Panc1 (cell line): ENCODE measurements at regions of chr11 and their contacts with region 1.

Region 1: GRCh38 chr11:57567515-57568329 is at the start of gene UBE2L6:
- DNase-seq: no peak
- ATAC-seq: peak; percentile 90
- H3K4me3 ChIP-seq: peak within 1 kb of the TSS; percentile 68 to 82
- H3K27ac ChIP-seq: peak within 1 kb of the TSS; percentile 77
- H3K4me1 ChIP-seq: peaks cover 12% of the 10 kb centered on the region
- H3K27me3 ChIP-seq: no peaks in the 10 kb centered on the region
- CTCF ChIP-seq: no peak; the same call in 1 of the 2 replicates
- total RNA-seq, gene UBE2L6: 19.1 TPM

Region 2: DNA sequence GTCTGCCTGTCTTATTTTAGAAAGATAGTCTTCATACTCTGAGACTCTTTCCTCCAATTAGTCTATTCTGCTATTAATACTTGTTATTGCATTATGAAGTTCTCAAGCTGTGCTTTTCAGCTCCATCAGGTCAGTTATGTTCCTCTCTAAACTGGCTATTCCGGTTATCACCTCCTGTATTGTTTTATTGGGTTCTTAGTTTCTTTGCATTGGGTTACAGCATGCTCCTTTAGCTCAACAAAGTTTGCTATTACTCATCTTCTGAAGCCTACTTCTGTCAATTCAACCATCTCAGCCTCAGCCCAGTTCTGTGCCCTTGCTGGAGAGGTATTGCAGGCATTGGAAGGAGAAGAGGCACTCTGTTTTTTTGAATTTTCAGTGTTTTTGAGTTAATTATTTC is 600.0 kb before region 1 on chr11:
- CTCF ChIA-PET with region 1: no interaction called
- POLR2A ChIA-PET with region 1: no interaction called
- in situ Hi-C with region 1: no loop called
- intact Hi-C with region 1: no loop called
- DNase-seq: no peak
- ATAC-seq: no peak
- H3K4me3 ChIP-seq: no peak overlapping the region
- H3K27ac ChIP-seq: no peak overlapping the region
- H3K4me1 ChIP-seq: no peaks in the 10 kb centered on the region
- H3K27me3 ChIP-seq: no peaks in the 10 kb centered on the region
- CTCF ChIP-seq: no peak

Region 3: DNA sequence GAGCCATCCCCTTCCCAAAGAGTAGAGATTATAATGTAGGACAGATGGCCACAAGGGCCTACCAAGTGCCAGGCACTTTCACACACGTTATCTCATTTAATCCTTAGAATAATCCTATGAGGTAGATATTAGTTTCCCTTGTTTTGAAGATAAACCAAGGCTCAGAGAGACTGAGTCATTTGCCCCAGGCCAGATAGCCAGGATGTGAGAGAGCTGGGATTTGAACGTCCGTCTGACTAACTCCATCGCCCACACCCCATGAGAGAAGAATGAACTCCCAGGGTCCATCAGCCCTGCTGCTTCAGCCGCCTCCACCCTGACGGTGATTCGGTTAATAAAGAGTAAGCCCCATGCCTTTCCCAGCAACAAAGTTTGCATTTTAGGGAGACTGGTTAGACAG is 197.5 kb before region 1 on chr11:
- CTCF ChIA-PET with region 1: no interaction called
- POLR2A ChIA-PET with region 1: interaction called, 13 read pairs
- in situ Hi-C with region 1: no loop called
- intact Hi-C with region 1: no loop called
- DNase-seq: no peak
- ATAC-seq: no peak
- H3K4me3 ChIP-seq: no peak overlapping the region
- H3K27ac ChIP-seq: no peak overlapping the region
- H3K4me1 ChIP-seq: no peaks in the 10 kb centered on the region
- H3K27me3 ChIP-seq: peaks cover 3% of the 10 kb centered on the region; the same call in 1 of the 2 replicates
- CTCF ChIP-seq: no peak

Region 4: GRCh38 chr11:57616595-57616994 is 48.9 kb after region 1 on chr11:
- CTCF ChIA-PET with region 1: no interaction called
- POLR2A ChIA-PET with region 1: no interaction called
- in situ Hi-C with region 1: no loop called
- intact Hi-C with region 1: loop called (anchors 2 kb)
- DNase-seq: no peak
- ATAC-seq: no peak
- H3K4me3 ChIP-seq: no peak overlapping the region
- H3K27ac ChIP-seq: no peak overlapping the region
- H3K4me1 ChIP-seq: no peaks in the 10 kb centered on the region
- H3K27me3 ChIP-seq: no peaks in the 10 kb centered on the region
- CTCF ChIP-seq: no peak

Region 5: DNA sequence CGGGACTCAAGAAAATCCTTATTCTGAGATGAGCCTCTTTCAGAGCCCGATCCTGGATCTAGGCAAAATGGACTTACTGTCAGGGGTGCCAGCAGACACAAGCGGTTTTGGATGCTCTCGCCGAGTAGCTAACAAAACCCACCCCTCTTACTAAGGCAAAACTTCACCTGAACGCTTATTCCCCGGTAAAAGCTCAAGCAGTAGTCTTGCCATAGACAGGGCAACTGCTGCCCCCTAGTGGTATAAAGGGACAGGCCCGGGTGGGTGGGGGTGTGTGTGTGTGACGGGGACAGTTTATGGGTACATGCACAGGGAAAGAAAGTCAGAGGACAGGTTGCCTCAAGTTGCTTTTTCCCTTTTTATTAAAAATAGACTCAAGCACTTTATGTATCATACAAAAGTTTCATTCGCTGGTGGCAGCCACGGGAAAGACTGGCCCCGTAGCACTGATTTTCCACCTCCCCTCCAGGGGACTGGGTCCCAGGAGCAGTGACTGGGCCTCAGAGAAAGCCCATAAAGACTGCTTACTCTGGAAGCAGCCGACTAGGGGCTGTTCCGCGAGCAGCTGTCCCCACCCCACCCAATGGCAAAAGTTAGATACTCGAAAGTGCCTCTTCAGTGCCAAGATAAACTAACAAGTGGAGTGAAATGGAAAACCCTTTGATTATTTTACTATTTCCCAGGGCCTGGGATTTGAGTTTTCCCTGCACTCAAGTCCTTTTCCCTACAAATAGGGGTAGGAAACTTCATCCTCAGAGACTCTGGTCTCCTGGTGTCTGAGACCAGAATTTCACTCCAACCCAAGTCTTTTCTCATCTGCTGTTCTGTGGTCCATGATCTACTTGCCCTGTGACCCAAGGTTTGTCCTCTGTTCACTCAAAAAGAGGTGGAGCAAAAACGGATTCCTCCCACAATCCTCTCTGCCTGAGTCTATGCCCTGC is 77.3 kb after region 1 on chr11:
- CTCF ChIA-PET with region 1: interaction called, 31 read pairs
- POLR2A ChIA-PET with region 1: no interaction called
- in situ Hi-C with region 1: no loop called
- intact Hi-C with region 1: loop called (anchors 1 kb)
- DNase-seq: no peak
- ATAC-seq: peak; percentile 77
- H3K4me3 ChIP-seq: no peak overlapping the region
- H3K27ac ChIP-seq: no peak overlapping the region
- H3K4me1 ChIP-seq: peaks cover 25% of the 10 kb centered on the region
- H3K27me3 ChIP-seq: peaks cover 10% of the 10 kb centered on the region; the same call in 1 of the 2 replicates
- CTCF ChIP-seq: peak; percentile 94